Activated CD4-positive, alpha-beta memory T cell treated with anti-CD3 and anti-CD28 coated beads for 36 hours (primary cell): ENCODE measurements at regions of chr3 and their contacts with region 1.

Region 1: DNA sequence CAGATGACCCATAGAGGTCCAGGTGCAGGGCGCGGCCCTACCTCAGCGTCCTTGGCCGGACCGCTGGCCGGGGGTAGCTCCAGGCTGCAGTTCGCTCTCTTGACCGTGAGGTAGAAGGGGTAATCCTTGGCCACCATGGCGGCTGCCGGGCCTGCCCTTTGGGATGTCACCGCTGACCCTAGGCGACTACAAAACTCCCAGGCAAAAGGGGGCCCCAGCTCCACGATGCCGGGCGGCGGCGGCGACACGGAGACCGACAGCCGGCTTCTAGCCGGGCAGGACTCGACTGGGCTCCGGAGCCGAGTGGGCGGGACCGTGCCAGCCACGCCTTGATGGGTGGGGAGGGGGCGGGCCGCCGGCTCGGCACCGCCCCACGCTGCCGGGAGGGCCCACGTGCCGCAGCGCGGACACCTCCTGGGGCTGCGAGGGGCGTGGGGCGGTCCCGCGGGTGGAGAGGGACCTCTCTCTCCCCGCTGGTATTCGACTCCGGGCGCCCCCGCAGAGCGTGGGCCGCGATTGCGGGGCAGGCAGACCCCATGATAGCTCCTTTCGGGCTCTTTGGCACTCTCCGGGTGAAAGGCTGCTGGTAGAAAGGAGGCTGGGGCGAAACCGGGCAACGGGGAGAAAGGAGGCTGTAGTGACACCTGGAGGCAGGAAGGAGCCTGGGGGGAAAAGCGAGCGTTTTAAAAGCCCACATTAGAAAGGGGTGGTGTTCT is at the start of gene ARHGEF3:
- DNase-seq: peak; percentile 92
- H3K4me3 Mint-ChIP-seq: peak within 1 kb of the TSS; percentile 84
- H3K27ac Mint-ChIP-seq: peak within 1 kb of the TSS; percentile 76
- H3K4me1 Mint-ChIP-seq: peaks cover 42% of the 10 kb centered on the region
- H3K27me3 Mint-ChIP-seq: no peaks in the 10 kb centered on the region
- total RNA-seq, gene ARHGEF3: 28.0 to 31.5 TPM

Region 2: GRCh38 chr3:56682462-56683121 is 119.2 kb before region 1 on chr3:
- CTCF ChIA-PET with region 1: interaction called, 9 read pairs
- POLR2A ChIA-PET with region 1: interaction called, 14 read pairs
- intact Hi-C with region 1: no loop called
- DNase-seq: peak; percentile 83
- H3K4me3 Mint-ChIP-seq: peak overlapping the region; percentile 97
- H3K27ac Mint-ChIP-seq: peak overlapping the region; percentile 97
- H3K4me1 Mint-ChIP-seq: peaks cover 37% of the 10 kb centered on the region
- H3K27me3 Mint-ChIP-seq: no peaks in the 10 kb centered on the region

Region 3: GRCh38 chr3:56725175-56725574 is 76.6 kb before region 1 on chr3:
- CTCF ChIA-PET with region 1: interaction called, 46 read pairs
- POLR2A ChIA-PET with region 1: interaction called, 14 read pairs
- intact Hi-C with region 1: loop called (anchors 1 kb)
- DNase-seq: peak; percentile 86
- H3K4me3 Mint-ChIP-seq: peak overlapping the region; percentile 52
- H3K27ac Mint-ChIP-seq: peak overlapping the region; percentile 83
- H3K4me1 Mint-ChIP-seq: peaks cover 32% of the 10 kb centered on the region
- H3K27me3 Mint-ChIP-seq: no peaks in the 10 kb centered on the region

Region 4: GRCh38 chr3:56775838-56776555 is 25.8 kb before region 1 on chr3:
- CTCF ChIA-PET with region 1: interaction called, 263 read pairs
- POLR2A ChIA-PET with region 1: no interaction called
- intact Hi-C with region 1: no loop called
- DNase-seq: no peak
- H3K4me3 Mint-ChIP-seq: no peak overlapping the region
- H3K27ac Mint-ChIP-seq: no peak overlapping the region
- H3K4me1 Mint-ChIP-seq: peaks cover 85% of the 10 kb centered on the region
- H3K27me3 Mint-ChIP-seq: no peaks in the 10 kb centered on the region

Region 5: GRCh38 chr3:56812754-56813650 is 11.2 kb after region 1 on chr3:
- CTCF ChIA-PET with region 1: interaction called, 81 read pairs
- POLR2A ChIA-PET with region 1: interaction called, 16 read pairs
- intact Hi-C with region 1: no loop called
- DNase-seq: no peak
- H3K4me3 Mint-ChIP-seq: no peak overlapping the region
- H3K27ac Mint-ChIP-seq: peak overlapping the region; percentile 75
- H3K4me1 Mint-ChIP-seq: peaks cover 78% of the 10 kb centered on the region
- H3K27me3 Mint-ChIP-seq: no peaks in the 10 kb centered on the region

Region 6: DNA sequence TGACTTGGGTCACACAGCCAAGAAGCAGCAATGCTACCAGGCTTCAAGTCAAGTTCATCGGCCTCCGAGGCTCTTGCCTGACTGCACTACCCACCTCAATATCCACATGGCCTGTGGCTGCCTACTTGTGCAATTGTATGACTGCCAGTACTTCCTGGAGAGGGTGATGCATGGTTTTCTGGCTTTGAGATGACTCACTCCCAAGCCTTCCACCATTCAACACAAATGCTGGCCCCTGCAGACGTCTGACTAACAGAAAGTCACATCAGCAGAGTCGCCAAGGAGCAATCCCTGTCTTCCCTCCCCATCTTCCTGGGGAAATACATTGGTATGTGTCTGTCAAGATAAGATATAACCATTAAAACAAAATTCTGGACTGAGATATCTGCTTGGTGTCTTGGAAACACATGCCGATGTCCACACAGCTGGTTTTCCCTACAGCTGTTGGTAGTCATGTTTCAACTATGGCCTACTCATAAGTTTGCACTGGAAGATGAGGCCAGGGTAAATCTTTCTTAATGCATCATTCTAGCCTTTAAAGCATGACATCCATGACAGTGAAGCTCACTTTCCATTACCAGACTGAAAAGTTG is 179.1 kb after region 1 on chr3:
- CTCF ChIA-PET with region 1: interaction called, 221 read pairs
- POLR2A ChIA-PET with region 1: interaction called, 7 read pairs
- intact Hi-C with region 1: loop called (anchors 2 kb)
- DNase-seq: peak; percentile 83
- H3K4me3 Mint-ChIP-seq: no peak overlapping the region
- H3K27ac Mint-ChIP-seq: peak overlapping the region; percentile 72
- H3K4me1 Mint-ChIP-seq: peaks cover 23% of the 10 kb centered on the region
- H3K27me3 Mint-ChIP-seq: no peaks in the 10 kb centered on the region